Breast epithelium (tissue), 4 donors: ENCODE measurements at regions of chr6 and their contacts with region 1.

Region 1: DNA sequence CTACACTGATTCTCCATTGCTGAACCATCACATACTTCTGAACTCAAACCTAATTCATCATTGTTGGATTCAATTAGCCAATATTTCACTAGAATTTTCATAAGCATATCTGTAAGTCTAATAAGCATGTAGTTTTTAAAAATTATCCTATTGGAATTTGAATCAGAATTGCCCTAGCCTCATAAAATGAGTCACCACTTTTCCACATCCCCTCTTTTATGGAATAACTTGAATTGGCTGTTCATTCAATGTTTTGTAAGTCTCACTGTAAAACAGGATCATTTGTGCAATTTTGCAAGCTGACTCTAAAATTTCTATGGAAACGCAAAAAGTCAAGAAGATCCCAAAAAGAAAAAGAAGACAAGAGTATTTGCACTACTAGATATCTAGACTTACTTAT is 141.0 kb downstream of the HACE1 start:
- DNase-seq: no peak
- H3K4me3 ChIP-seq: no peak overlapping the region
- H3K27ac ChIP-seq: no peak overlapping the region
- H3K4me1 ChIP-seq: no peaks in the 10 kb centered on the region
- H3K27me3 ChIP-seq: no peaks in the 10 kb centered on the region
- CTCF ChIP-seq: no peak
- POLR2A ChIP-seq: no peak

Region 2: GRCh38 chr6:103937389-103937788 is 781.3 kb before region 1 on chr6:
- intact Hi-C with region 1: loop called (anchors 5 kb)
- DNase-seq: no peak
- H3K4me3 ChIP-seq: no peak overlapping the region
- H3K27ac ChIP-seq: no peak overlapping the region
- H3K4me1 ChIP-seq: no peaks in the 10 kb centered on the region
- H3K27me3 ChIP-seq: no peaks in the 10 kb centered on the region
- CTCF ChIP-seq: no peak
- POLR2A ChIP-seq: no peak

Region 3: GRCh38 chr6:106658469-106658868 is 1939.8 kb after region 1 on chr6:
- intact Hi-C with region 1: no loop called
- DNase-seq: no peak
- H3K4me3 ChIP-seq: no peak overlapping the region
- H3K27ac ChIP-seq: no peak overlapping the region
- H3K4me1 ChIP-seq: no peaks in the 10 kb centered on the region
- H3K27me3 ChIP-seq: no peaks in the 10 kb centered on the region
- CTCF ChIP-seq: no peak
- POLR2A ChIP-seq: no peak